Activated CD4-positive, alpha-beta T cell treated with anti-CD3 and anti-CD28 coated beads for 36 hours (primary cell): ENCODE measurements at regions of chr9 and their contacts with region 1.

Region 1: GRCh38 chr9:4297151-4297785 is 2.6 kb downstream of the GLIS3 start:
- DNase-seq: peak; percentile 65
- ATAC-seq: peak; percentile 37
- H3K4me3 Mint-ChIP-seq: peak overlapping the region; percentile 86
- H3K27ac Mint-ChIP-seq: peak overlapping the region; percentile 86
- H3K4me1 Mint-ChIP-seq: peaks cover 45% of the 10 kb centered on the region
- H3K27me3 Mint-ChIP-seq: peaks cover 32% of the 10 kb centered on the region

Region 2: GRCh38 chr9:4235871-4236804 is 61.1 kb before region 1 on chr9:
- CTCF ChIA-PET with region 1: no interaction called
- POLR2A ChIA-PET with region 1: no interaction called
- intact Hi-C with region 1: loop called in 1 of 2 experiments (anchors 5 kb)
- DNase-seq: no peak
- ATAC-seq: no peak
- H3K4me3 Mint-ChIP-seq: no peak overlapping the region
- H3K27ac Mint-ChIP-seq: no peak overlapping the region
- H3K4me1 Mint-ChIP-seq: peaks cover 21% of the 10 kb centered on the region
- H3K27me3 Mint-ChIP-seq: peaks cover 3% of the 10 kb centered on the region

Region 3: GRCh38 chr9:4315582-4316215 is 18.4 kb after region 1 on chr9:
- CTCF ChIA-PET with region 1: interaction called, 12 read pairs
- POLR2A ChIA-PET with region 1: no interaction called
- intact Hi-C with region 1: loop called in 1 of 2 experiments (anchors 1 kb)
- DNase-seq: peak; percentile 88
- ATAC-seq: peak; percentile 97
- H3K4me3 Mint-ChIP-seq: no peak overlapping the region
- H3K27ac Mint-ChIP-seq: no peak overlapping the region
- H3K4me1 Mint-ChIP-seq: no peaks in the 10 kb centered on the region
- H3K27me3 Mint-ChIP-seq: peaks cover 4% of the 10 kb centered on the region